Thyroid gland (tissue), 4 donors: ENCODE measurements at regions of chr5 and their contacts with region 1.

Region 1: GRCh38 chr5:141258948-141259347 is 13.8 kb downstream of the PCDHB15 start:
- DNase-seq: no peak
- H3K4me3 ChIP-seq: no peak overlapping the region
- H3K27ac ChIP-seq: no peak overlapping the region
- H3K4me1 ChIP-seq: no peaks in the 10 kb centered on the region
- H3K27me3 ChIP-seq: no peaks in the 10 kb centered on the region
- CTCF ChIP-seq: no peak
- POLR2A ChIP-seq: no peak

Region 2: GRCh38 chr5:141319202-141319601 is 60.3 kb after region 1 on chr5:
- intact Hi-C with region 1: loop called (anchors 5 kb)
- DNase-seq: no peak
- H3K4me3 ChIP-seq: no peak overlapping the region
- H3K27ac ChIP-seq: no peak overlapping the region
- H3K4me1 ChIP-seq: peaks cover 0 to 4% of the 10 kb centered on the region in 2 donors
- H3K27me3 ChIP-seq: no peaks in the 10 kb centered on the region
- CTCF ChIP-seq: no peak
- POLR2A ChIP-seq: no peak